ENCODE measurements at regions of chr19 and their contacts with region 1.

Region 1: DNA sequence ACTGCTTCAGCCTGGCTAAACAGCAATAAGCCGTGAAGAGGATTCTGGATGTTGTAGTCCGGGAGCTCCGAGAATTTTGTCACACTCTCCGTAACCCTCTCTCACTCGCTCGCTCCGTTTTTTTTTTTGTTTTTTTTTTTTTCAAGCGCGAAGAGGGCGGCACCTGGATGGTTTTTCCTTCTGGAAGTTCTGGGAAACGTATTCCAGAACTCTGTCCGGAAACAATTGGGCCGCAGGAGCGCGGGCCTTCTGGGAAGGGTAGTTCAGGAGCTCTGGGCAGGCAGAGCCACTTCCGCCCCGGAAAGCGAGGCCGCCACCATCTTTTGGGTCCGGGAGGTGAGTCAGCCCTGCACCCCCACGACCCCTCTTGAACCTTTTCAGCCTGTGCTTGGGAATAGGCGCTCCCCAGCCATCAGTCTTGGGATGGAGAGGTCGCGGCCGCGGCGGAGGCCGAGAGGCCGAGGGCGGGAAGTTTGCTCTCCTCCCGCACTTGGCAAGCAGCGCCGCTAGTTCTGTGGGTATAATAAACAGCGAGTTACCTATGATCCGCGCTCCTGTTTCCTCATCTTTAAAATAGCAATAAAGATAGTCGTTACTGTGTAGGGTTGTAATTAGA is at the start of gene ZNF227:
- H3K4me3 ChIP-seq: peak within 1 kb of the TSS; percentile 64
- H3K27ac ChIP-seq: peak within 1 kb of the TSS; percentile 90
- H3K4me1 ChIP-seq: peaks cover 38% of the 10 kb centered on the region
- CTCF ChIP-seq: no peak

Region 2: GRCh38 chr19:44093931-44094765 is 118.2 kb before region 1 on chr19 and contains the start of gene ZNF224:
- CTCF ChIA-PET with region 1: no interaction called
- POLR2A ChIA-PET with region 1: interaction called, 20 read pairs
- H3K4me3 ChIP-seq: peak within 1 kb of the TSS; percentile 61
- H3K27ac ChIP-seq: peak within 1 kb of the TSS; percentile 92
- H3K4me1 ChIP-seq: peaks cover 19% of the 10 kb centered on the region; the same call in 1 of the 2 replicates
- CTCF ChIP-seq: no peak; the same call in 1 of the 2 replicates

Region 3: DNA sequence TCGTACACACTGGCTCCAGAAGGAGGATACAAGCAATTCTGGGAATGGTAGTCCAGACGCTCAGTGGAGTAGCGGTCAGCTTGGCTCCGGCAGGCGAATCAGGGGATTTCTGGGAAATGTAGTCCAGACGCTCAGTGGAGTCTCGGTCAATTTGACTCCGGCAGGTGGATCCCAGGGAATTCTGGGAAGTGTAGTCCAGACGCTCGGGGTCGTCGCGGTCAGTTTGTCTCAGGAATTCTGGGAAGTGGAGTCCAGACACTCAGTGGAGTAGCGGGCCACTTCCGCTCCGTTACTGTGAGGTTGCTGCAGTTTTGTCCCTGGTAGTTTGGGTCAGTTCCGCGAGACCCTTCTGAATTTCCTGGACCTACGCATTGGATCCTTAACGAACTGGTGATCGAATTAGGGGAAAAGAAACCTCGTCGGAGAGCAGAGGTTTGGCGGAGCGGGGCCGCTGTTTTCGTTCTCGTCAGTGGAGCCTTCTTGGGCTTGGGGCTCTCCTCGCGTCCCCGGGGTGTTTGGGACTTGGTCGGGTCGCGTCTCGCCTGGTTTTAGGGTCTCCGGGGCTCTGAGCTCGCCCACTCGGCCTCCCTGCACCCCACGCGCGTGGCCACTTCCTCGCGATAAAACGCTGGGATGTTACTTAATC is 99.1 kb before region 1 on chr19 and contains the start of gene ZNF225:
- CTCF ChIA-PET with region 1: interaction called, 3 read pairs
- POLR2A ChIA-PET with region 1: interaction called, 18 read pairs
- H3K4me3 ChIP-seq: peak within 1 kb of the TSS; percentile 59
- H3K27ac ChIP-seq: peak within 1 kb of the TSS; percentile 81
- H3K4me1 ChIP-seq: peaks cover 14% of the 10 kb centered on the region
- CTCF ChIP-seq: peak; percentile 79; the same call in 1 of the 2 replicates

Region 4: DNA sequence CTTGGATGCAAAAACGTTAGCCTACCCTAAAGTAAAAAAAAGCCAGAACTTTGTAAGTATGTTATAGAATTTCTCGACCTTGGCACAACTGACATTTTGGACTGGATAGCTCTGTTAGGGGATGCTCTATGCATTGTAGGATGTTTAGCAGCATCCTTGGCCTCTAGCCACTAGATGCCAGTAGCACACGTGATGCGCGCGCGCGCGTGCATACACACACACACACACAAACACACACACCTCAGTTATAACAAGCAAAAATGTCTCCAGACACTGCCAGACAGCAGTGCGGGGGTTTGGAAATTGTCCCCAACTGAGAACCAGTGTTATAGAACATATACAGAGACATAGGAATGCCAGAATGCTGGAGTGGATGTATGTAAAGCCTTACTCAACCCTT is 30.2 kb before region 1 on chr19:
- CTCF ChIA-PET with region 1: interaction called, 4 read pairs
- POLR2A ChIA-PET with region 1: interaction called, 18 read pairs
- H3K4me3 ChIP-seq: no peak overlapping the region
- H3K27ac ChIP-seq: peak overlapping the region; percentile 26; the same call in 1 of the 2 replicates
- H3K4me1 ChIP-seq: peaks cover 7% of the 10 kb centered on the region; the same call in 1 of the 2 replicates
- CTCF ChIP-seq: peak; percentile 36

Region 5: DNA sequence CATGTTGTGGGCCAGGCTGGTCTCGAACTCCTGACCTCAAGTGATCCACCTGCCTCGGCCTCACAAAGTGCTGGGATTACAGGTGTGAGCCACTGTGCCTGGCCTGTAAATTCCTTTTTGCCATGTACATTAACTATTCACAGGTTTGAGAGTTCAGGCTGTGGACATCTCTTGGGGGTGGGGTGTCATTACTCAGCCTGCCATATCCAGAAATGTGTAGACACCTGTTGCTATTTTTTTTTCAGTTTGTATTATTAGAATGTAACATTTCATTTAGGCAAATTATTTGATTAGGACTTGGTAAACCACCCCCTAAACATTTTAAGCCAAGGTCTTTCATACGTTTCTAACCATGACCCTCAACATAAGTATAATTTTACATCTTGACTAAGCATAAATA is 20.5 kb after region 1 on chr19:
- CTCF ChIA-PET with region 1: interaction called, 3 read pairs
- POLR2A ChIA-PET with region 1: interaction called, 14 read pairs
- H3K4me3 ChIP-seq: no peak overlapping the region
- H3K27ac ChIP-seq: no peak overlapping the region
- H3K4me1 ChIP-seq: no peaks in the 10 kb centered on the region
- CTCF ChIP-seq: no peak

Region 6: DNA sequence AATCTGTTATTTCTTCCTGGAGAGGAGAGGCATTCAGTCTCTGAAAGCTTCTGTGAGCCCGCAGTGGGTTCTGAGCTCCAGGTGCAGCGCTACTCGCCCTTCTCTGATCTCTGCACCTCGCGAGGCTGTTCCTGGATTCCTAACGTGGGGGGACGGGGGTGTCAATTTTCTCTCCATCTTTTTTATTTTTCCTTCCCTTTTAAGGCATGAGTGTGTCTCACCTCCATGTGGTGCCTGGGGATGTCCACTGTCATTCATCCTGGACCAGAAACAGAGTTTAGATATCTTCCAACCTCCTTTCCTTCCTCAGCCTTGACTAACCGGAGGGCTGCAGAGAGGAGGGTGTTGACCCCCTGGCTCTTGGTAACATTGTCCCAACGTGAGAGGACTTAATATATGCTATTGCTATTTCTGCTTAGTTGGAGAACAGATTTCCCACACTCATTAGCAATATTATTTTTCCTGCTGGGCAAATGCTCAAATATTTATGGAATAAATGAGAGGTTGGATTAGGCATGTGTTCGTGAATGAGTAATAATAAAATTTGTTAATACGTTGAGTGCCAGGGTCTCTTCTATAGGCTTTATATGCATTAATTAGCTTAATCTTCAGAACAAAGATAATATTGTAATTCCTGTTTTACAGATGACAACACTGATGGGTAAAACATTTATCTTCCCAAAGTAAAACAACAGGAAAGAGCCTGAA is 48.2 kb after region 1 on chr19:
- CTCF ChIA-PET with region 1: interaction called, 3 read pairs
- POLR2A ChIA-PET with region 1: interaction called, 36 read pairs
- H3K4me3 ChIP-seq: no peak overlapping the region
- H3K27ac ChIP-seq: peak overlapping the region; percentile 91
- H3K4me1 ChIP-seq: peaks cover 25% of the 10 kb centered on the region
- CTCF ChIP-seq: peak; percentile 46

Region 7: DNA sequence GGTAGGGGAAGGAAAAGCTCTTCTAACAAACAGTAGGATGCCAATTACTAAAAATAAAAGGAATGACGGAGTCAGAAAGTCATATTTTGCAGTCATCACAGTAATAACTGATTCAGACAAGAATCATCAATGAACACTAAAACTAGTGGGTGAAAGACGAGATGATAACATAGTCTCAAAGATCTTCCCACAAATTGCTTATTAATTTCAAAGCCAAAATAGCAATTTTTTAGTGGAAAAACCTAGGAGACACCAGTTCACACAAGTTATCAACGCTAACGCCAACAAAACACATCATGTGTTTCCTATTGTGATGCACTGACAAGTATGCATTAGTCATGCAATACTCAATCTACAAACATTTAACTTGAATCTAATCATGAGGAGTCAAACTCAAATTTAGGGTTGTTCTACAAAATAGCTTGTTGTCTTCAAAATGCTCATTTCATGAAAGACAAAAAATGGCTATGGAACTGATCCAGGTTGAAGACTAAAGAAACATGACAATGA is 65.9 kb after region 1 on chr19:
- CTCF ChIA-PET with region 1: no interaction called
- POLR2A ChIA-PET with region 1: no interaction called
- H3K4me3 ChIP-seq: no peak overlapping the region
- H3K27ac ChIP-seq: no peak overlapping the region
- H3K4me1 ChIP-seq: no peaks in the 10 kb centered on the region
- CTCF ChIP-seq: no peak

Region 8: GRCh38 chr19:44430956-44431355 is 218.6 kb after region 1 on chr19:
- CTCF ChIA-PET with region 1: no interaction called
- POLR2A ChIA-PET with region 1: no interaction called
- H3K4me3 ChIP-seq: no peak overlapping the region
- H3K27ac ChIP-seq: no peak overlapping the region
- H3K4me1 ChIP-seq: no peaks in the 10 kb centered on the region
- CTCF ChIP-seq: no peak